CD14-positive monocyte (primary cell): ENCODE measurements at regions of chr10 and their contacts with region 1.

Region 1: DNA sequence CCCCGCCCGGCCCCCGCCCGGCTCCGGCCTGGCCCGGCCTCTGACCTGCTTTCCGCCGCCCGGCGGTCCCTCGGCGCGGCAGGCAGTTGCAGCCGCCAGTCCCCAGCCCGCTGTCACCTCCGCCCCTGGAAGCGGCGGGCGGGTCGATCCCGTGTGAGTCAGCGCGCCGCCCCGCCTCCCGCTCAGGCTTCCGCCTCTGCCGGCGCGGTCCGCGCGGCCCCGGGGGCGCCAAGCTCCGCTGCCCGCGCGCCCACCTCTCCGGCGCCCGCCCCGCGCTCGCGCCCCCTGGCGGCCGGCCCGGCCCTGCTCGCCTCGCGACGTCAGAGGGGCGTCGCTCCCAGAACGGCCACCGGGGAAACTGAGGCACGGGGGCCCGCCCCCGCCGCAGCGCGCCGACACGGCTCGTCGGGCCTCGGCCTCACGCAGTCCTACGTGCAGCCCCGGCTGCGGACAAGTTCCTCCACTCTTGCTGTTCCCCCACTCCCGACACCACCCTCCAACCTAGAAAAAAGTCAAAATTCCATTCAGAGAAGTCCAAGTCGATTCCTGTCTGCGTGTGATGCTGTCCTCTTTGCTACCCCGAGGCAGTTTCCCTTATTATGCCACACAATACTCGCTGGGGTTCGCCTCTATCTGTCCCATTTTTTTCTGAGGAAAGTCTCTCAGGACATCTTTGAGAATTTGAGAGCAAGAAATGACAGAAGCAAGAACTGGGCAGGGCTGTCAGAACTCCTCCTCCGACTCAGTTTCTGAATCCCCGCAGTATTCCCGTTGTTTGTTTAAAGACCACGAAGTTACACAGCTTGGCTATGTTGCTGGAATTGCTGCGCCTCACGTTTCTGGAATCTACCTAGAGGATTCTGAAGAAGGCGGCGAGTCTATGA is at the start of gene DNMBP:
- DNase-seq: peak; percentile 70 to 82 (median 81)
- H3K4me3 ChIP-seq: peak within 1 kb of the TSS; percentile 70 to 84 (median 81)
- H3K4me3 Mint-ChIP-seq: peak within 1 kb of the TSS; percentile 95 to 96
- H3K27ac ChIP-seq: peak within 1 kb of the TSS; percentile 11 to 76
- H3K27ac Mint-ChIP-seq: peak within 1 kb of the TSS; percentile 75 to 93 (median 88)
- H3K4me1 ChIP-seq: peaks cover 26 to 41% of the 10 kb centered on the region in 2 donors
- H3K4me1 Mint-ChIP-seq: peaks cover 44% of the 10 kb centered on the region
- H3K27me3 ChIP-seq: no peaks in the 10 kb centered on the region
- H3K27me3 Mint-ChIP-seq: peaks cover 8 to 24% (median 17%) of the 10 kb centered on the region in 3 donors
- CTCF ChIP-seq: peak; percentile 60
- polyA plus RNA-seq, gene DNMBP: 0.83 to 10.3 (median 1.2) TPM

Region 2: DNA sequence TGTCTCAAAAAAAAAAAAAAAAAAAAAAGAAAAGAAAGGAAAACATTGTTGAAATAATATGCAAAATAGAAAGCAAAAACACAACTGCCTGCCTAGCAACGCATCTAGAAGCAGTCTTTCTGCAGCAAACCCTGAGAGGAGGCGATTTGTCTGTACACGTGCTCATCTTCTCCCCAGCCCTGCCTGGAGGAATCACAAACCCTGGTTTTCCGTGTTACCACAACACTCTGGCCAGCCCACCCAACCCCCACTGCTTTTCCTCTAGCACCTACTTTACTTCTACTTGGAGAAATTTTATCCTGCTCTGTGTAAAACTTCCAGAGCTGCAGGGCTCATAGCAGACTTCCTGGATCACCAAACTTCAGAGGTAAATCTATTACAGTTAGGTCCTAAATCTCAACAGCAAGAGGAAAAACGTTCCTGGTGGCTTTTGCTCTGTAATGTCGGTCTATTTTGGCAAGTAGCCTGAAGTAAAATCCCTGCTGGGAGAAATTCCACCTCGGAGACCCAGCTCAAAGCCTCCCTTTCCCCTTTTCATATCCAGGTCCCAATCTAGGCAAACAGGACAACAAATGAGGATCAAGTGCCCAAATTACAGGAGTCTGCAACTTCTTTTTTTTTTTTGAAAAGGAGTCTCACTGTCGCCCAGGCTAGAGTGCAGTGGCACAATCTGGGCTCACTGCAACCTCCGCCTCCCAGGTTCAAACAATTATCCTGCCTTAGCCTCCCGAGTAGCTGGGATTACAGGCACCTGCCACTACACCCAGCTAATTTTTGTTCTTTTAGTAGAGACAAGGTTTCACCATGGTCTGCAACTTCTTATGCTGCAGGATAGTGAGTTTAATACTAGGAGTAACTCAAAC is 91.8 kb before region 1 on chr10:
- intact Hi-C with region 1: loop called in 1 of 2 experiments (anchors 5 kb)
- DNase-seq: no peak
- H3K4me3 ChIP-seq: no peak overlapping the region
- H3K4me3 Mint-ChIP-seq: no peak overlapping the region
- H3K27ac ChIP-seq: no peak overlapping the region
- H3K27ac Mint-ChIP-seq: peak overlapping the region in 2 of 7 donors; percentile 47 to 50
- H3K4me1 ChIP-seq: peaks cover 7 to 9% of the 10 kb centered on the region in 2 donors
- H3K4me1 Mint-ChIP-seq: peaks cover 15% of the 10 kb centered on the region
- H3K27me3 ChIP-seq: no peaks in the 10 kb centered on the region
- H3K27me3 Mint-ChIP-seq: peaks cover 0 to 2% (median 0%) of the 10 kb centered on the region in 3 donors
- CTCF ChIP-seq: no peak

Region 3: DNA sequence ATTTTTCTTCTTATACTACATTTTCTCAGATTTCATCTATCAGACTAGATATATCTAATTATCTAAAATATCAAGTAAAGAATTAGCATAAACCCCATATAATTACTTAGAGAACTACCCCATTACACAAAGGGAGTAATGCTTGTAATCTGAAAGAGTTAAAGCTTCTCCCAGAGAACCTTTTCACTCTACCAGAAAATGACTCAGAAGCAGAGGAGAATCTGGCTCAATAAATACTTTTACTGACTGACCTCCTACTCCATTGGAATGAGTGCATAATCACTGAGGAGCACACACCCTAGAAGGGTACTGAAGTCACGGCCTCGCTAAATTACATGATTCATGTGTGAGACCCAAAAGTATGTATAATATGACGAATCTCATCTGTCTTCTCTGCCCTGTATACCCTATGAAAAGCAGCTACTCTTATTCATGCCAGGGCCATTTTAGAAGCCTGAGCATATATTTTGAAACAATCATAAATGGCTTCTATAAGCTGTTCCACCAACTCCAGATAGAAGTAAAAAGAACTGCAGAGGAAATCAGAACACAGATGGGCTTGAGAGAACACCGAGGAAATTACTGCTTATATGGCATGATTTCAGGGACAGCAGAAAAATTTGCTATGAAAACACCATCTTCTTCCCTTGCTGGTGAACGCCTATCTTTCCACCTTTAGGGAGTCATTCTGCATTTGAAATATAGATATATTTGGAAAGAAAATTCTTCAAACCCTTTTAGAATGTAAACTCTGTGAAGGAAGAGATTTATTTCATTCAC is 33.0 kb before region 1 on chr10:
- intact Hi-C with region 1: loop called (anchors 5 kb)
- DNase-seq: peak; percentile 12 to 40 (median 17)
- H3K4me3 ChIP-seq: no peak overlapping the region
- H3K4me3 Mint-ChIP-seq: no peak overlapping the region
- H3K27ac ChIP-seq: peak overlapping the region in 1 of 2 donors; percentile 72
- H3K27ac Mint-ChIP-seq: peak overlapping the region in 4 of 7 donors; percentile 16 to 87 (median 68)
- H3K4me1 ChIP-seq: peaks cover 33 to 38% of the 10 kb centered on the region in 2 donors
- H3K4me1 Mint-ChIP-seq: peaks cover 36% of the 10 kb centered on the region
- H3K27me3 ChIP-seq: no peaks in the 10 kb centered on the region
- H3K27me3 Mint-ChIP-seq: peaks cover 0 to 5% (median 0%) of the 10 kb centered on the region in 3 donors
- CTCF ChIP-seq: no peak

Region 4: DNA sequence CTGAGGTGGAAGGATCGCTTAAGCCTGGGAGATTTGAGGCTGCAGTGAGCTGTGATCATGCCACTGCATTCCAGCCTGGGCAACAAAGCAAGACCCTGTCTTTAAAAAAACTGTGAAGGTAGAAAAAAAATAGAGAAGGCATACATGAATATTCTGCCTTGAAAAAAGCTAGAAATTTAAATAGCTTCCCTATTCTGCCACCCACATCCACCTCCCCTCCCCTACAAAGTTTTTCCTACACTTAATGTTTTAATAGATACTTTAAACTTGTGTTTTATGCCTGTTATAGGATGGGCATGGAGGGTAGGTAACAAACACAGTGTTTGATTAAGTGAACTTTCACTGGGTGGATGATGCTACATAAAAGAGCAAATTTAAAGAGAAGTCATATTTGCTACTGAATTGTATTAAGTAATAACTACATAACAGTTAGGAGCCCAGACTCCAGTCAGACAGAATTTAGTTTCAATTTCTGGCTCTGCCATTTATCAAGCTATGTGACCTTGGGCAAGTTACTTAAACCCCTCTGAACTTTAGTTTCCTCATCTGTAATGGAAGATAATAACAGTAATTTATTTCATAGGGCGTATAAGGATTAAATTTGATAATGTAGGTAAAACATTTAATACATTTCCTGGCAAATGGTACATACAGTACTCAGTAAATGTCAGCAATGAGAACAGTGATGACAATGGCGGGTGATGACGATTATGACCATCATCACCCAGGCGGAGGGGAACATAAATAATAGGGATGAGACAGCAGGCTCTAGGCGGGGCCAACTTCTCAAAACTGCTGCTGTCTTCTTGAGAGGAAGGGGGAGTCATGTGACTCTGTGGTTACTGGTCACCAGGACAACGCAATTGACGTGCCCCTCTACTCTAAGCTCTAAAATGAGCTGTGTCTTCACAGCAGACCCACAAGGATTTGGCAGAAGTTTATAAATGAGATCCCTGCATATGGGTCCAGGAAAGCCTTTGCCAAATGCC is 16.0 kb before region 1 on chr10:
- intact Hi-C with region 1: loop called in 1 of 2 experiments (anchors 2 kb)
- DNase-seq: peak; percentile 97 to 99 (median 99)
- H3K4me3 ChIP-seq: peak overlapping the region; percentile 11 to 51 (median 48)
- H3K4me3 Mint-ChIP-seq: peak overlapping the region; percentile 42 to 80
- H3K27ac ChIP-seq: peak overlapping the region; percentile 85 to 96
- H3K27ac Mint-ChIP-seq: peak overlapping the region; percentile 97 to 99 (median 98)
- H3K4me1 ChIP-seq: peaks cover 24 to 27% of the 10 kb centered on the region in 2 donors
- H3K4me1 Mint-ChIP-seq: peaks cover 25% of the 10 kb centered on the region
- H3K27me3 ChIP-seq: no peaks in the 10 kb centered on the region
- H3K27me3 Mint-ChIP-seq: peaks cover 0 to 3% (median 1%) of the 10 kb centered on the region in 3 donors
- CTCF ChIP-seq: no peak